ENCODE measurements at regions of chr6 and their contacts with region 1.

Region 1: GRCh38 chr6:136635615-136636014 is 85.4 kb upstream of the MAP7 start:
- DNase-seq: no peak
- H3K4me3 ChIP-seq: no peak overlapping the region
- H3K4me3 Mint-ChIP-seq: no peak overlapping the region
- H3K27ac Mint-ChIP-seq: no peak overlapping the region
- H3K4me1 ChIP-seq: no peaks in the 10 kb centered on the region
- H3K4me1 Mint-ChIP-seq: no peaks in the 10 kb centered on the region
- H3K27me3 ChIP-seq: no peaks in the 10 kb centered on the region; the same call in 1 of the 2 replicates
- H3K27me3 Mint-ChIP-seq: no peaks in the 10 kb centered on the region
- CTCF ChIP-seq: no peak

Region 2: DNA sequence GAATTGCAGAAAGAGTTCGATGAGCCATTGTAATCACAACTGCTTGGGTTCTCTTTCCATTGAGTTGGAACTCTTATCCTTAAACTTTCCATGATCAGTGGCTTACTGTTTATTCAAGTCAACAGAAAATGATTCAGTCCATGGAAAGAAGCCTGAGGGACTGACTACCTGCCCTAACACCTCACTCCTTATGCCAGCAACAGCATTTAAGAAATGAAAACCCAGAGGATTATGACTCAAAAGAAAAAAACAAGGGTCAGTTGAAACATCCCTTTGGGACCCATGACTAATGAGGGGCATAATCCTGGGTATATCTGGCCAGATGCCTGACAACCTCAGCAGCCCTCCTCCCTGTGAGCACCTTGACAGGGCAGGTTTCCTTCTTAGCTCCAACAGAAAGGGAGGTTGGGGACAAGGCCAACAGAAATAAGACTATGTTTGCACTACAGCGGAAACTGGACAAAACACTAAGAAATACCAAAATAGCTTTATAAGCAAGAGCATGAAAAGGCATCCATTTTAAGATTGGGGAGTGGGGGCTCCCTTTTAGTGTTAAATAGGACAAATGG is 50.0 kb after region 1 on chr6:
- CTCF ChIA-PET with region 1: no interaction called
- POLR2A ChIA-PET with region 1: interaction called, 17 read pairs
- intact Hi-C with region 1: no loop called
- DNase-seq: no peak
- H3K4me3 ChIP-seq: no peak overlapping the region
- H3K4me3 Mint-ChIP-seq: no peak overlapping the region
- H3K27ac Mint-ChIP-seq: no peak overlapping the region
- H3K4me1 ChIP-seq: no peaks in the 10 kb centered on the region
- H3K4me1 Mint-ChIP-seq: no peaks in the 10 kb centered on the region
- H3K27me3 ChIP-seq: no peaks in the 10 kb centered on the region
- H3K27me3 Mint-ChIP-seq: no peaks in the 10 kb centered on the region
- CTCF ChIP-seq: no peak

Measured in Caco-2 (cell line).